Activated CD4-positive, alpha-beta T cell treated with anti-CD3 and anti-CD28 coated beads, Interleukin-2, amount 10 ng/mL, durations not matched to agents 24 days and 14 days (primary cell): ENCODE measurements at regions of chr6 and their contacts with region 1.

Region 1: DNA sequence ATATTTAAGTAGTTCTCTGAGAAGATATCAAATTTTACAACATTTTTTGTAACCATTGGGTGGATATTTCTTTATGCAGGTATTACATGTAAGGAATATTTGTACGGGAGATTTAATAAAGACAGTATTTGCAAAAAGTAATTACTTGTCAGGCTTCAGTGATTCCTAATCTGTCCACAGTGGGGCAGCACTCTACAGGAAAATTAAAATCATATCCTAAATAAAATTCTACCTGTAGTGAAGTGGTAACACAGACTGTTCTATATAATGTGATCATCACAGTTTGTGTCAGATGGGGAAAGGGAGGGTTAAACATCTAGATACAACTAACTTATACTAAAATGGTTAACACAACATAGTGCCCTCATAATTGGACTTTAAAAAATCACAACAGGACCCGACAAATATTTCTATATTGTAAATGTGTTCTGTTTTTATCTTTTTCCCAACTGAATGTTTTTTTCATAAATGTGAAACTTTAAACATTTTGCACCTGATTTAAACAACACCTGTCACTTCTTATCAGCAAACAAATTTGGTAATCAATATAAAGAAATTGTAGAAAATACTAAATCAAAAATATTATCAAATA is 145.6 kb upstream of the MANEA start:
- DNase-seq: peak; percentile 72
- H3K4me3 Mint-ChIP-seq: no peak overlapping the region
- H3K27ac Mint-ChIP-seq: no peak overlapping the region
- H3K4me1 Mint-ChIP-seq: no peaks in the 10 kb centered on the region
- H3K27me3 Mint-ChIP-seq: no peaks in the 10 kb centered on the region

Region 2: DNA sequence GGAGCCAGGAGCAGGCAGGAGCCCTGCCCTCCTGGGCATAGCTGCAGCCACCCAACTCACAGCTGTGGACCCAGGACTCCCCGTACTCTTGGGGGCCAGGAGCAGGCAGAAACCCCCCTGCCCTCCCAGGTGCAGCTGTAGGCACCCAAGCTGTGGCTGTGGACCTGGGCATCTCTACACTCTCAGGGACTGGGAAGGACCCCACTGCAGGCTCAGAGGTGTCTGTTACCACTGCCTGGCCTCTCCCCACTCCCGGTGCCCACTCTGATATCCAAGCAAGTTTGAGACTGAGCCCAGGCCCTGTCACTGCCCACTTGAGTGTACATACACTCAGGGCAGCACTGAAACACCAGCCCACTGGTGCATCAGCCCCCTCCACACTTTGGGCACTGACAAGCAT is 47.9 kb before region 1 on chr6:
- intact Hi-C with region 1: no loop called
- DNase-seq: no peak
- H3K4me3 Mint-ChIP-seq: no peak overlapping the region
- H3K27ac Mint-ChIP-seq: no peak overlapping the region
- H3K4me1 Mint-ChIP-seq: no peaks in the 10 kb centered on the region
- H3K27me3 Mint-ChIP-seq: no peaks in the 10 kb centered on the region

Region 3: GRCh38 chr6:95614094-95614493 is 182.4 kb after region 1 on chr6:
- intact Hi-C with region 1: no loop called
- DNase-seq: no peak
- H3K4me3 Mint-ChIP-seq: no peak overlapping the region
- H3K27ac Mint-ChIP-seq: no peak overlapping the region
- H3K4me1 Mint-ChIP-seq: no peaks in the 10 kb centered on the region
- H3K27me3 Mint-ChIP-seq: peaks cover 10% of the 10 kb centered on the region

Region 4: GRCh38 chr6:95866732-95867131 is 435.0 kb after region 1 on chr6:
- intact Hi-C with region 1: loop called (anchors 2 kb)
- DNase-seq: no peak
- H3K4me3 Mint-ChIP-seq: no peak overlapping the region
- H3K27ac Mint-ChIP-seq: no peak overlapping the region
- H3K4me1 Mint-ChIP-seq: no peaks in the 10 kb centered on the region
- H3K27me3 Mint-ChIP-seq: no peaks in the 10 kb centered on the region

Region 5: GRCh38 chr6:96468681-96469224 is 1037.0 kb after region 1 on chr6:
- intact Hi-C with region 1: loop called (anchors 2 kb)
- DNase-seq: no peak
- H3K4me3 Mint-ChIP-seq: no peak overlapping the region
- H3K27ac Mint-ChIP-seq: no peak overlapping the region
- H3K4me1 Mint-ChIP-seq: peaks cover 14% of the 10 kb centered on the region
- H3K27me3 Mint-ChIP-seq: peaks cover 11% of the 10 kb centered on the region